GM12878 (cell line): ENCODE measurements at regions of chr18 and their contacts with region 1.

Region 1: GRCh38 chr18:830315-830901 is 18.4 kb upstream of the YES1 start:
- DNase-seq: no peak
- ATAC-seq: peak; percentile 62
- H3K4me3 ChIP-seq: no peak overlapping the region
- H3K27ac ChIP-seq: no peak overlapping the region
- H3K4me1 ChIP-seq: peaks cover 7% of the 10 kb centered on the region
- H3K27me3 ChIP-seq: no peaks in the 10 kb centered on the region
- CTCF ChIP-seq: no peak
- EP300 ChIP-seq: no peak
- POLR2A ChIP-seq: no peak
- RAD21 ChIP-seq: no peak

Region 2: DNA sequence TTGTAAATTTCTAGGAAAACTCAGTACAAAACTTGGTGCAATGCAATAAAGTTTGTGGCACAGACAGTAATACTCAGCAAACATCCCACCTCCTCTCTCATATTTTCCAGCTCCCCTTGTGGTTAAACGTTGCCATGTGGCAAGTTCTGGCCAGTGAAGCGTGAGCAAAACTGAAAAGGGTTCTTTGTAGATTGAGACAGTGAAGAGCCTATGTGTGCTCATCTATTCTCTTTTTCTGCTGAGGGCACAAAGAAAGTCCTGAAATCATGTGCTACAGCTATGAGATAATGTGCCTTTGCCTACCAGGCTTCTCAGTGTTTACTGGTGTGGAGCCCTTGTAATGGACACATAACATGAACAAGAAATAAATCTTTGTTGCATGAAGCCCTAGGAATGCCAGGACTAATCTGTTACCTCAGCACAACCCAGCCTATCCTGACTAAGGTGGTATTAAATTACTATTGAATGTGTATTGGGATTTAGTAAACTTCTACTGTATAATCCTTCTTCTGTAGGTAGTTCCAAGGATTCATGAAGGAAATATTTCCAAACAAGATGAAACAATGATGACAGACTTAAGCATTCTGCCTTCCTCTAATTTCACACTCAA is 185.9 kb before region 1 on chr18:
- CTCF ChIA-PET with region 1: interaction called, 12 read pairs
- POLR2A ChIA-PET with region 1: no interaction called
- RAD21 ChIA-PET with region 1: interaction called, 5 read pairs
- SMC1A ChIA-PET with region 1: interaction called, 4 read pairs
- in situ Hi-C with region 1: no loop called
- intact Hi-C with region 1: no loop called
- DNase-seq: peak; percentile 19
- ATAC-seq: peak; percentile 71
- H3K4me3 ChIP-seq: no peak overlapping the region
- H3K27ac ChIP-seq: no peak overlapping the region
- H3K4me1 ChIP-seq: peaks cover 5% of the 10 kb centered on the region; the same call in 1 of the 2 replicates
- H3K27me3 ChIP-seq: no peaks in the 10 kb centered on the region
- CTCF ChIP-seq: no peak
- EP300 ChIP-seq: no peak
- POLR2A ChIP-seq: no peak
- RAD21 ChIP-seq: no peak

Region 3: GRCh38 chr18:731185-731584 is 99.2 kb before region 1 on chr18:
- CTCF ChIA-PET with region 1: interaction called, 295 read pairs
- POLR2A ChIA-PET with region 1: no interaction called
- RAD21 ChIA-PET with region 1: interaction called, 3 read pairs
- SMC1A ChIA-PET with region 1: interaction called, 222 read pairs
- in situ Hi-C with region 1: no loop called
- intact Hi-C with region 1: no loop called
- DNase-seq: no peak
- ATAC-seq: no peak
- H3K4me3 ChIP-seq: no peak overlapping the region
- H3K27ac ChIP-seq: no peak overlapping the region
- H3K4me1 ChIP-seq: no peaks in the 10 kb centered on the region
- H3K27me3 ChIP-seq: no peaks in the 10 kb centered on the region
- CTCF ChIP-seq: no peak
- EP300 ChIP-seq: no peak
- POLR2A ChIP-seq: no peak
- RAD21 ChIP-seq: no peak

Region 4: DNA sequence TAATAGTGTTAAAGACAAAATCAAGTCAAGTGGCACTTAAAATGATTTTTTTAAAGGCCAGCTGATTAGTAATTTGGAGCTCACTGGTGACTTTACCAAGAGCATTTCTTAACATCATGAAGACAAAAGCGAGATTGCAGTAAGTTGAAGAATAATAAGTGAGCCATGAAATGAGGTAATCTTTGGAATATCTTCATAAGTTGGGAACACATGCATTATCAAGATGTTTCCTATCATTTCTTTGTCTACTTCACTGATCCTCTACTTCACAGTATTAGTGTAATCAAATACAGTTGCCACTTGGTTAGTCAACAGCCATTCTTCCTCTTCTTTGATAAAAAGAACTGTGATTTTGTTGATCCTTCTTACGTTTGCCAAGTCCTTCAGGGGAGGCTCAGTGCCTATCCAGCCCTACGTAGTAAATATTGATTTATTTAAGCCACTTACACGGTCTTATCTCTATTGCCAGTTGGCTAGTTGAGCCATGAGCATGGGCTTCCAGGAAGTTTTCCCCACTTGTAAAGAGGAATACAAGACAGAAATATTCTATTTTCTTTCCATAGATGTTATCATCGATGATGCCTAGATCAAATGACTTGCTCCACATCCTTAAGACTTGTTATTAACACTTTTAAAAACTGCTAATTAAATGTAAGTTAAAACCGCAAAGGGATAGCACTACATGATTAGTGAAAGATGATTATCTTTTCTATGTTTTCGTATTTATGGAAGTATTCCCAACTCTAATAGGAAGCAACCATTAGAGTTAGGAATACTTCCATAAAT is 64.5 kb before region 1 on chr18:
- CTCF ChIA-PET with region 1: interaction called, 12 read pairs
- POLR2A ChIA-PET with region 1: no interaction called
- RAD21 ChIA-PET with region 1: interaction called, 5 read pairs
- SMC1A ChIA-PET with region 1: interaction called, 6 read pairs
- in situ Hi-C with region 1: no loop called
- intact Hi-C with region 1: no loop called
- DNase-seq: no peak
- ATAC-seq: no peak
- H3K4me3 ChIP-seq: no peak overlapping the region
- H3K27ac ChIP-seq: no peak overlapping the region
- H3K4me1 ChIP-seq: no peaks in the 10 kb centered on the region
- H3K27me3 ChIP-seq: no peaks in the 10 kb centered on the region
- CTCF ChIP-seq: no peak
- EP300 ChIP-seq: no peak
- POLR2A ChIP-seq: no peak
- RAD21 ChIP-seq: no peak

Region 5: DNA sequence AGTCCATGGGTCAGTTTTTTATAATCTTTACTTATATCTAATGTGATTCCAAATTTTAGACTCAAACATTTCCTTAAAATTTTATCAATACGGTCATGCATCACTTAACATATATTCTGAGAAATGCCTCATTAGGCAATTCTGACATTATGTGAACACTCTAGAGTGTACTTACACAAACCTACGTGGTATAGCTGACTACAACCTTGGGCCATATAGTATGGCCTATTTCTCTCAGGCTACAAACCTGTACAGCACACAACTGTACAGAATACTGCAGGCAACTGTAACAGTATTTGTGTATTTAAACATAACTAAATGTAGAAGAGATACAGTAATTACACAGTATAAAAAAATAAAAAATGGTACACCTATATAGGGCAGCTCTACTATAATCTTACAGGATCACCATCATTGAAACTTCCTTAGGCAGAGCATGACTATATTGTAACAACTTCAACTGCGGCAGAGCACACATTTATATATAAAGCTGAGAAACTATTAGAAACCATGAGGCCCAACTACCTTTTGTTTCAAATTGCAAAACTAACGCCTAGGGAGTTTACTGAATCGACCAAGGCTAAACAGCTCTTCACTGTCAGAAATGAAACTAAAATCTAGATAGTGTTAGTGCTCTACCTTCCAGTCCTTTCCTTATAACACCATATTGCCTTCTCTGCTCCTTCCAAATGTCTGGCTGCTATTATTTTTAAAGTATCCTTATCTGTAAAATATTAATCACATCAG is 25.2 kb before region 1 on chr18:
- CTCF ChIA-PET with region 1: interaction called, 12 read pairs
- POLR2A ChIA-PET with region 1: no interaction called
- RAD21 ChIA-PET with region 1: interaction called, 6 read pairs
- SMC1A ChIA-PET with region 1: interaction called, 19 read pairs
- in situ Hi-C with region 1: no loop called
- intact Hi-C with region 1: no loop called
- DNase-seq: no peak
- ATAC-seq: peak; percentile 64
- H3K4me3 ChIP-seq: peak overlapping the region; percentile 31; the same call in 1 of the 2 replicates
- H3K27ac ChIP-seq: peak overlapping the region; percentile 60
- H3K4me1 ChIP-seq: peaks cover 18% of the 10 kb centered on the region
- H3K27me3 ChIP-seq: no peaks in the 10 kb centered on the region
- CTCF ChIP-seq: no peak
- EP300 ChIP-seq: no peak
- POLR2A ChIP-seq: no peak
- RAD21 ChIP-seq: no peak